ENCODE measurements at regions of chr1 and their contacts with region 1.

Region 1: DNA sequence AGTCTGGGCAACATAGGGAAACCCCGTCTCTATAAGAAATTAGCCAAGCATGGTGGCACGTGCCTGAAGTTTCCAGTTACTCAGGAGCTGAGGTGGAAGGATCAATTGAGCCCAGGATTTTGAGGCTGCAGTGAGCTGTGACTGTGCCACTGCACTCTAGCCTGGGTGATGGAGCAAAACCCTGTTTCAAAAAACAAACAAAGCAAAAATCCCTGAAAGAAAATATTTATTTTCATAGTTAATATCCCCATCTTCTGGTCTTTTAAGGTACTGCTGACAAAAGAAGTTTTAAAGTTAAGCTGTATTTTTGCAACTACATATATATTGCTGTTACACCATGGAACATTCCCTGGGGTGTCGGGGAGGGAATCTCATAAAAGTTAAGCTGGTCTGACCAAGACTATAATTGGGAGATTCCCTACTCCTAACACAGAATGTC is 26.0 kb downstream of the VAMP4 start:
- DNase-seq: no peak
- ATAC-seq: peak; percentile 33

Region 2: DNA sequence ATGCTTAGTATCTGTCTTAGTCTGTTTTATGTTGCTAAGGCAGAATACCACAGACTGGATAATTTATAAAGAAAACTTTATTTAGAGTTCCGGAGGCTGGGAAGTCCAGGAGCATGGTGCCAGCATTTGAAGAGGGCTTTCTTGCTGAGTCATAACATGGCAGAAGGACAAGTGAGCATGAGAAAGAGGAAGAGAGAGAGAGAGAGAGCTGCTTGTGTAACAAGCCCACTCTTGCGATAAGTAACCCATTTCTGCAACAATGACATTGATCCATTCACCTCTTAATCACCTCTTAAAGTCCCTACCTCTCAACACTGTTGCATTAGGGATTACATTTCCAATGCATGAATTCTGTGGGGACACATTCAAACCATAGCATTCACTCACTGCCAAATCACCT is 105.4 kb before region 1 on chr1:
- intact Hi-C with region 1: no loop called
- DNase-seq: no peak
- ATAC-seq: no peak

Region 3: GRCh38 chr1:171644805-171645483 is 70.9 kb before region 1 on chr1:
- intact Hi-C with region 1: loop called (anchors 2 kb)
- DNase-seq: peak; percentile 73
- ATAC-seq: peak; percentile 82

Region 4: DNA sequence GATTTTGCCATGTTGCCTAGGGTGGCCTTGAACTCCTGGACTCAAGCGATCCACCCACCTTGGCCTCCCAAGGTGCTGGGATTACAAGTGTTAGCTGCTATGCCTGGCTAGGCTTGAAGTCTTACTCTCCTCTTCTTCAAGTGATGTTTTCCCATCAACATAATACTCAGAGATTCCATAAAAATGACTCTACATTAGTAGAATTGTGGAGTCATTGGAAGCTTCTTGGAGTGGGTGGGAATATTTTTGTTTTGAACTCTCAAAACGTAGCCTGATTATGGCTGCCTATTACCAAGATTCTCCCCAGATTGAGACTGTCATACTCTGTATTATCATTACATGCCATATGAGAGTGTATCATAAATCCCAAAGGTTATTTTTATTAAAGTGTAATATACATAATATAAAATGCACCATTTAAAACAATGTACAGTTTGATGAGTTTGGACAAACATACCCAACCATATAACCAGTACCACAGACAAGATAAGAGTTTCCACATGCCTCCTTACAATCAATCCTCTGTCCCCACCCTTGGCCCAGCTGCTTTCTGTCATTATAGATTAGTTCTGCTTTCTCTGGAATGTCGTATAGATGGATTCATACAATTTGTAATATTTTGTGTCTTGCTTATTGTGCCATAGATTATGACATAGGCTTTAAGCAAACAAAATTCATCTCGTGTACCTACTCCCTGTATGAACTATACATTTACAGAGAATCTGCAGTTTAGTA is 117.4 kb after region 1 on chr1:
- intact Hi-C with region 1: no loop called
- DNase-seq: no peak
- ATAC-seq: no peak

Measured in left ventricle myocardium superior (tissue), 1 donor.